ENCODE measurements at regions of chr11 and their contacts with region 1.

Region 1: GRCh38 chr11:62601394-62602140 is at the start of gene MTA2:
- DNase-seq: peak; percentile 100
- H3K4me3 Mint-ChIP-seq: peak within 1 kb of the TSS; percentile 87
- H3K27ac Mint-ChIP-seq: peak within 1 kb of the TSS; percentile 96
- H3K4me1 Mint-ChIP-seq: peaks cover 58% of the 10 kb centered on the region
- H3K27me3 Mint-ChIP-seq: no peaks in the 10 kb centered on the region

Region 2: DNA sequence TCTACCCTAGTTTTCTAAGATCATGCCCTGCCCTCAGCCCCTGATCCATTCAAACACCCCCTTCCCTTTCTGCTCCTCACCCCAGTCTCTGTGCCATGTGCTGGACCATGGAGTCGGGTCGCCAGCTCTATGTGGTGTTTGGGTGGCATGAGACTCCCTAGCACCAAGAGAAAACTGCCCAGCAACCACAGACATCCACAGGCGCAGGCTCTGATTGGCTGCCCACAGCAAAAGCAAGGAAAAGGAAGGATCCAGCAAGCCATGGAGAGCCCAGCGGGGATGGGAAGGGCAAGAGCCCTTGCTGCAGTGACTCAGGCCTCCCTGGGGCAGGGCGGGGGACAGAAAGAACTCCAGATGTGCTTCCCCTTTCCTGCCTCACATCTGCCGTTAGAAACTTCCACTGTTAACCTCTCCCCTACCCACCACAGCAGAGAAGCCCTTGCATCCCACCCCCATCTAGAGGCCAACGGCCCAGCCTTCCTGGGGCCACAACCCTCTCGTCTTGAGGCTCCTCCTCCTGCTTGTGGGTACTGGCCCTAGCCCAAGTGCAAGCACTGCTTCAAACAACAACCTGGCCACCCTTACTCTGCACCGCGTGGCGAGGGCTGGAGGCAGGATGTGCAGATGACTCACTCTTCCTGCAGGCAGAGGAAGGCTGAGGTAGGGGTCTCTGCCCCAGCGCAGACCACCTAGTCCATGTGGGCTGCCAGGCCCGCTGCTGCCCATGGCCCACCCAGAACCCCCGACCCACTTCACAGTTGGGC is 45.3 kb before region 1 on chr11:
- CTCF ChIA-PET with region 1: no interaction called
- DNase-seq: peak; percentile 93
- H3K4me3 Mint-ChIP-seq: peak overlapping the region; percentile 59
- H3K27ac Mint-ChIP-seq: peak overlapping the region; percentile 97
- H3K4me1 Mint-ChIP-seq: peaks cover 95% of the 10 kb centered on the region
- H3K27me3 Mint-ChIP-seq: no peaks in the 10 kb centered on the region

Region 3: GRCh38 chr11:62612366-62613290 is 11.1 kb after region 1 on chr11 and contains the starts of genes EML3 and ROM1:
- CTCF ChIA-PET with region 1: interaction called, 10 read pairs
- DNase-seq: peak; percentile 93
- H3K4me3 Mint-ChIP-seq: peak within 1 kb of the TSS; percentile 91
- H3K27ac Mint-ChIP-seq: peak within 1 kb of the TSS; percentile 95
- H3K4me1 Mint-ChIP-seq: peaks cover 67% of the 10 kb centered on the region
- H3K27me3 Mint-ChIP-seq: no peaks in the 10 kb centered on the region

Region 4: GRCh38 chr11:62621567-62622470 is 20.3 kb after region 1 on chr11 and contains the start of gene B3GAT3:
- CTCF ChIA-PET with region 1: interaction called, 10 read pairs
- DNase-seq: peak; percentile 98
- H3K4me3 Mint-ChIP-seq: peak within 1 kb of the TSS; percentile 90
- H3K27ac Mint-ChIP-seq: peak within 1 kb of the TSS; percentile 97
- H3K4me1 Mint-ChIP-seq: peaks cover 31% of the 10 kb centered on the region
- H3K27me3 Mint-ChIP-seq: peaks cover 3% of the 10 kb centered on the region

Measured in activated naive CD4-positive, alpha-beta T cell treated with anti-CD3 and anti-CD28 coated beads, Interleukin-2, amount 10 ng/mL, durations not matched to agents 7 days and 5 days (primary cell).